ENCODE measurements at regions of chr2 and their contacts with region 1.

Region 1: GRCh38 chr2:152025678-152026287 is 73.1 kb downstream of the CACNB4 start:
- DNase-seq: peak; percentile 63
- ATAC-seq: peak; percentile 98
- H3K4me3 ChIP-seq: peak overlapping the region; percentile 27; the same call in 1 of the 2 replicates
- H3K27ac ChIP-seq: no peak overlapping the region
- H3K4me1 ChIP-seq: no peaks in the 10 kb centered on the region
- H3K27me3 ChIP-seq: no peaks in the 10 kb centered on the region; the same call in 1 of the 2 replicates
- CTCF ChIP-seq: peak; percentile 81
- POLR2A ChIP-seq: no peak
- RAD21 ChIP-seq: peak; percentile 49

Region 2: DNA sequence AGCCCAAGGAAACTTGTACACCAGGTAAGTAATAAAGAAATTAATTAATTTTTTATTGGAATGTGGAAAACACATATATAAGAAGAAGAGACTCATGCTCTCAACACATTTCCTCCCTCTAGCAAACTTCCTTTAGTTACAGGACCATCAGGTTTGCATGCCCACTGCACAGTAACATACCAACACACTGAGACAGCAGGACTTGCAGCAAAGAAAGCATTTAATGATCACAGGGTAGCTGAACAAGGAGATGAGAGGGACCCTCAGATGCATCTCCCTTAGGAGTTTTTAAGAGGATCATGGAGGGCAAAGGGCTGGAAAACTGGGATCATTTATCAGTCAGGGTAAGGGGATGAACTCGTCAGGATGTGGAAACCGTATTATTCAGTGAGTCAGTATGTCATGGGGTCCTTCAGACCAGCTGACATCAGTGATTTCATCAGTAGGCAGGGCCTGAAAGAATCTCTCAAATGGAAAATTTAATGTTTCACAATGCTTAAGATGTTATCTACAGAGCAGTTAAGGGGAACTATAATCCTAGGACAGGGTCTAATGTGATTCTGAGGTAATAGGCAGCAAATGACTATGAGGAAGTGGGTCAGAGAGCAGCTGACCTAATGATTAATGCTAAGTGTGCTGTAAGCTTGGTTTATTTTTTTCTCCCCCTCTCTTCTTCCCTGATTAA is 1344.5 kb before region 1 on chr2:
- CTCF ChIA-PET with region 1: no interaction called
- POLR2A ChIA-PET with region 1: no interaction called
- dilution Hi-C with region 1: no loop called
- in situ Hi-C with region 1: no loop called
- intact Hi-C with region 1: no loop called
- DNase-seq: peak; percentile 97
- ATAC-seq: peak; percentile 83
- H3K4me3 ChIP-seq: no peak overlapping the region
- H3K27ac ChIP-seq: peak overlapping the region; percentile 81
- H3K4me1 ChIP-seq: peaks cover 7% of the 10 kb centered on the region; the same call in 1 of the 2 replicates
- H3K27me3 ChIP-seq: no peaks in the 10 kb centered on the region
- CTCF ChIP-seq: no peak
- POLR2A ChIP-seq: no peak
- RAD21 ChIP-seq: peak; percentile 16; the same call in 1 of the 2 replicates

Region 3: DNA sequence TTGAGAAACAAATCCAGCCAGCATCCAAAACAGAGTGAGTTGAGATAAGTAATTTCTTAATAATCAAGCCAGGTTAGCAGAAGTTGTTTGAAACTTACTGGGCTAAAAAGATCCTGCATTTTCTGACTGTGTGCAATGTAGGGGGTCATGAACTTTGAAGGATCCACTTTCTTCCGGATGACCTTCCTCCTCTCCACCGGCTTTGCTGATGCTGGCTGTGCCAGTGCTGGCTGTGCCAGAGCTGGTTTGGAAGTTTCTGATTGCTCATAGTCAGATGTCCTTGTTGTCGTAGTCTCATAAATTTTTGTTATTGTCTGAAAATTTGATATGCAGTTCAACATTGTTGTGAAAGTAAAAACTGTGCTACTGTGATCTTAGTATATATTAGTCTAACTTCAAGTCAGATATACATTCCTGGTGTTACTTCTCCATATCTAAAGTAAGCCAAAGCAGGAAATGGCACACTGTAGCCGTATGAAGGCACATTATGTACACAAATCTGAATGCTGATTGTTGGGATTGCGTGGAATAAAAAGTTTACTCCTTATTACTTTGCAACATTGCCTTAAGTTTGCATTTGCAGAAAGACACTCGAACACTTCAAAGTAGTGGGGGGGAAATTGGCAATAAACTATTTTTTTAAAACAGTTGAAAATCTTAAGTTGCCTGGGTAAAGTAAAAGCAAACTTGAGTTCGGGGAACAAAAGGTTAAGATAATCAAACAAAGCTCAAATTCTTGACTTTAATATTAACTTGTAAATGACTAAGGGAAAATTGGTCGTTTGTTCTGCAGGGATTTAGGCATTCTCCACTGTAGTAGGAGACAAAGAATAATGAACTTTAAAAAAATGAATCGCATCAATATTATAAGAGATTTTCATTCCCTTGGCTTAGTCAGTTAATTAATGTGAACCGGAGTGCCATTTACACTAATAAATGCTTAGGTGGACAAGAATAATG is 297.9 kb before region 1 on chr2:
- CTCF ChIA-PET with region 1: no interaction called
- POLR2A ChIA-PET with region 1: no interaction called
- dilution Hi-C with region 1: no loop called
- in situ Hi-C with region 1: no loop called
- intact Hi-C with region 1: no loop called
- DNase-seq: no peak
- ATAC-seq: no peak
- H3K4me3 ChIP-seq: no peak overlapping the region
- H3K27ac ChIP-seq: no peak overlapping the region
- H3K4me1 ChIP-seq: no peaks in the 10 kb centered on the region
- H3K27me3 ChIP-seq: no peaks in the 10 kb centered on the region; the same call in 1 of the 2 replicates
- CTCF ChIP-seq: no peak
- POLR2A ChIP-seq: no peak
- RAD21 ChIP-seq: no peak

Region 4: DNA sequence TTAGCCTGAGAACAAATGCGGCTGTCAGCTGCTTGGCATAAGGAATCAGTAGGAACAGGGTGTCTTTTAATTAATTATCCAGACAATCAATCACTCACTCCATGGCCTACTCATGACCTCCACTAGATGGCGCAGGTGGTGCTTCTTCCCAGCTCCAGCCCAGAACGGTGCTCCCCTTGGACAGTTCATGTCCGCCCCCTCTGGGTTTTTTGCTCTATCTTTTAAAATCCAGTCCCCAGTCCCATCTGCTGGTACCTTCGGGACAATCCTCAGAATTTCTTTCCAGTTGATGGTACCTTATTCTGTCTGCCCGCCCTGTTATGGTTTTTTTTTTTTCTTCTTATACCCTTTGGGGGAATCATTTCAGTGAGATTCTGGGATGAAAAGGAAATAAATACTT is 26.7 kb before region 1 on chr2:
- CTCF ChIA-PET with region 1: interaction called, 12 read pairs
- POLR2A ChIA-PET with region 1: no interaction called
- dilution Hi-C with region 1: no loop called
- in situ Hi-C with region 1: no loop called
- intact Hi-C with region 1: loop called (anchors 1 kb)
- DNase-seq: peak; percentile 34
- ATAC-seq: peak; percentile 85
- H3K4me3 ChIP-seq: no peak overlapping the region
- H3K27ac ChIP-seq: no peak overlapping the region
- H3K4me1 ChIP-seq: no peaks in the 10 kb centered on the region
- H3K27me3 ChIP-seq: peaks cover 6% of the 10 kb centered on the region
- CTCF ChIP-seq: peak; percentile 62
- POLR2A ChIP-seq: no peak
- RAD21 ChIP-seq: peak; percentile 48

Region 5: GRCh38 chr2:152012697-152013096 is 13.1 kb before region 1 on chr2:
- CTCF ChIA-PET with region 1: interaction called, 20 read pairs
- POLR2A ChIA-PET with region 1: no interaction called
- dilution Hi-C with region 1: no loop called
- in situ Hi-C with region 1: no loop called
- intact Hi-C with region 1: no loop called
- DNase-seq: peak; percentile 42
- ATAC-seq: peak; percentile 77
- H3K4me3 ChIP-seq: no peak overlapping the region
- H3K27ac ChIP-seq: no peak overlapping the region
- H3K4me1 ChIP-seq: no peaks in the 10 kb centered on the region
- H3K27me3 ChIP-seq: peaks cover 10% of the 10 kb centered on the region
- CTCF ChIP-seq: no peak
- POLR2A ChIP-seq: no peak
- RAD21 ChIP-seq: no peak

Measured in IMR-90 (cell line).